GM10248 (cell line): ENCODE measurements at regions of chr7 and their contacts with region 1.

Region 1: GRCh38 chr7:134458806-134459698 is at the start of gene AKR1B1:
- DNase-seq: peak; percentile 96
- CTCF ChIP-seq: peak; percentile 73

Region 2: DNA sequence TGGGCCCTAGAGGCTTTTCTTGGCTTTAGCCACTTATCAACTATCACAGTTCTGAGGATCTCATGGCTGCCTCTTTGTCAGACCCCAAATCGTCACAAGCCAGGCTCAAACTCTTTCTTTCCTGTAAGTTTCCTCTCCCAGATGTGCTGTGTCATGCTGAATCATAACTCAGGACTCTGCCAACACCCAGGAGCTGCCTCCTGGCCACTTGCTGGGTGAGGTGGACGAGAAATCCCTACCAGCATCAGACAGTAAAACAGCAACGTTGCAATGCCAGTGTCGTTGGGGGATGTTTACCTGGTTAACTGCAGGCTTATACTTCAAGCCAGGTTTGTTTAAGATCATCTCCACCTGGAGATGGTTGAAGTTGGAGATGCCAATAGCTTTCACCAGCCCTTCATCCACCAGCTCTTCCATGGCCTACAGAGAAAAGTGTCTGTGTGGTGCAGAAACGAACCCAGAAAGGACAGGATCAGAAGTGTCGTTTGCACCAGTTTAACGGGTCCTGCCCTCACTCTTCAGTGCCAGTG is 10.3 kb before region 1 on chr7:
- CTCF ChIA-PET with region 1: interaction called, 26 read pairs
- POLR2A ChIA-PET with region 1: no interaction called
- DNase-seq: no peak
- CTCF ChIP-seq: no peak

Region 3: GRCh38 chr7:134480736-134481135 is 21.7 kb after region 1 on chr7:
- CTCF ChIA-PET with region 1: interaction called, 12 read pairs
- POLR2A ChIA-PET with region 1: no interaction called
- DNase-seq: no peak
- CTCF ChIP-seq: no peak

Region 4: GRCh38 chr7:134811765-134812164 is 352.7 kb after region 1 on chr7:
- CTCF ChIA-PET with region 1: no interaction called
- POLR2A ChIA-PET with region 1: no interaction called
- DNase-seq: no peak
- CTCF ChIP-seq: no peak